ENCODE measurements at regions of chr16 and their contacts with region 1.

Region 1: GRCh38 chr16:20849587-20850390 is 43.5 kb downstream of the REXO5 start:
- DNase-seq: peak; percentile 42 to 69
- H3K4me3 ChIP-seq: no peak overlapping the region
- H3K27ac ChIP-seq: no peak overlapping the region
- H3K4me1 ChIP-seq: peaks cover 33% of the 10 kb centered on the region
- H3K27me3 ChIP-seq: no peaks in the 10 kb centered on the region
- CTCF ChIP-seq: peak; percentile 99

Region 2: GRCh38 chr16:20191566-20191965 is 658.2 kb before region 1 on chr16:
- CTCF ChIA-PET with region 1: no interaction called
- POLR2A ChIA-PET with region 1: no interaction called
- intact Hi-C with region 1: no loop called
- DNase-seq: no peak
- H3K4me3 ChIP-seq: no peak overlapping the region
- H3K27ac ChIP-seq: no peak overlapping the region
- H3K4me1 ChIP-seq: no peaks in the 10 kb centered on the region
- H3K27me3 ChIP-seq: peaks cover 14% of the 10 kb centered on the region
- CTCF ChIP-seq: no peak

Region 3: DNA sequence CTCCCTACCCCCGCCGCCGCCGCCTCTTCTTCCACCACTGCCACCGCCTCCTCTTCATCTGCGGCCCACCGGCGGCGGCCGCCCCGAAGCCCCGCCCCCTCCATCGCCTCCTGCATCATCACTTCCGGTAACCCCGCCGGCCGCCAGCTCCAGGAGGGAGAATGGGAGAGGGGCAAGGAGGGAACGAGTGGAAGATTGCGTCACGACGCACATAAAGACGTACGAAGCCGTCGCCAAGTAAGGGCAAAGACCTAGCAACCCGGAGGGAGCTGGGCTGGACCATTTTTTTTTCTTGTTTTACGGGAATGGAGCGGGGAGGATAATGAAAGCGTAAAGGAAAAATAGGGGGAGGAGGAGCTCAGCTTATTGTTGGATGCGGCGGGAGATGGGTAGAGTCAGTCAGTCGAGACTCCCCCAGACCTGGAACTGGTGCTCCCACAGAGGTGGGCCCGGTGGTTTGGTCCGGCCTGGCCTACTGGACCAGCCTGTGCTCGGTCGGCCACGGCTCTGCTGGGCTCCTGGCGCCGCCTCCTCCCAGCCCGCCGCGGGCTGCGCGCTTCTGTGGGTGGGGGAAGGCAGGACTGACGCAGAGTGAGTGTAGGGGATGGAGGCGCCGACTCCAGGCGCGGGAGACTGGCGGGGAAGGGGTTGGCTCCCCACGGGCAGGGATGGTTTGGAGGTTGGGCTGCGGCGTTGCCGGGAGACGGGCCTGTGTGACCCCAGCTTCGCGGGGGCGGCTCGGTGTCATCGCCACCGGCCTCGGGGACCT is 50.7 kb after region 1 on chr16 and contains the starts of genes DCUN1D3 and LYRM1:
- CTCF ChIA-PET with region 1: no interaction called
- POLR2A ChIA-PET with region 1: no interaction called
- intact Hi-C with region 1: loop called (anchors 1 kb)
- DNase-seq: peak; percentile 90 to 94
- H3K4me3 ChIP-seq: peak within 1 kb of the TSS; percentile 84
- H3K27ac ChIP-seq: peak within 1 kb of the TSS; percentile 99
- H3K4me1 ChIP-seq: peaks cover 65% of the 10 kb centered on the region
- H3K27me3 ChIP-seq: no peaks in the 10 kb centered on the region
- CTCF ChIP-seq: no peak
- total RNA-seq, gene DCUN1D3: 11.8 and 14.6 TPM in 2 replicates
- total RNA-seq, gene LYRM1: 32.2 and 51.7 TPM in 2 replicates

Region 4: GRCh38 chr16:20938426-20938825 is 88.6 kb after region 1 on chr16:
- CTCF ChIA-PET with region 1: no interaction called
- POLR2A ChIA-PET with region 1: no interaction called
- intact Hi-C with region 1: loop called (anchors 5 kb)
- DNase-seq: peak; percentile 38 to 87
- H3K4me3 ChIP-seq: peak overlapping the region; percentile 22; the same call in 1 of the 2 replicates
- H3K27ac ChIP-seq: peak overlapping the region; percentile 95
- H3K4me1 ChIP-seq: peaks cover 31% of the 10 kb centered on the region
- H3K27me3 ChIP-seq: no peaks in the 10 kb centered on the region
- CTCF ChIP-seq: no peak

Region 5: DNA sequence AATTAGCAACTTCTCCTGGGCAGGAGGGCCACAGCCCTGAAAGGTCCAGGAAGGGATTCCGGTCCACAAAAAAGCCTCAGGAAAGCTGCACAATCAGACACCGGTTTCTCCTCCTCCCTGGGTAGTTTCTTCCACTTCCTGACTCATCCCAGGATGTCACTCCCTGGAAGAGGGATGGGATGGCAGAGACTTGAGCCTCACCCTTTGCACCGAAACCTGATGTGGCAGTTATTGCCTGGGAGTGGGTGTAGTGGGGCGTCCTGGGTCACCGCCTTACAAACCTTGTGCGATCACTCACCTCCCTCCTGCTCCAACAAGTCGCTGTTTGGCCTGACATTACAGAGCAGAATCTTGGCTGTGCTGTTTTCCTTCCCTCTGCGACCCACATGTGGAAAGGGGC is 121.6 kb after region 1 on chr16:
- CTCF ChIA-PET with region 1: no interaction called
- POLR2A ChIA-PET with region 1: interaction called, 11 read pairs
- intact Hi-C with region 1: no loop called
- DNase-seq: no peak
- H3K4me3 ChIP-seq: no peak overlapping the region
- H3K27ac ChIP-seq: no peak overlapping the region
- H3K4me1 ChIP-seq: 0 out of 2 replicates have a peak, but pooled peaks cover 4% of the 10 kb centered on the region
- H3K27me3 ChIP-seq: no peaks in the 10 kb centered on the region
- CTCF ChIP-seq: no peak

Region 6: DNA sequence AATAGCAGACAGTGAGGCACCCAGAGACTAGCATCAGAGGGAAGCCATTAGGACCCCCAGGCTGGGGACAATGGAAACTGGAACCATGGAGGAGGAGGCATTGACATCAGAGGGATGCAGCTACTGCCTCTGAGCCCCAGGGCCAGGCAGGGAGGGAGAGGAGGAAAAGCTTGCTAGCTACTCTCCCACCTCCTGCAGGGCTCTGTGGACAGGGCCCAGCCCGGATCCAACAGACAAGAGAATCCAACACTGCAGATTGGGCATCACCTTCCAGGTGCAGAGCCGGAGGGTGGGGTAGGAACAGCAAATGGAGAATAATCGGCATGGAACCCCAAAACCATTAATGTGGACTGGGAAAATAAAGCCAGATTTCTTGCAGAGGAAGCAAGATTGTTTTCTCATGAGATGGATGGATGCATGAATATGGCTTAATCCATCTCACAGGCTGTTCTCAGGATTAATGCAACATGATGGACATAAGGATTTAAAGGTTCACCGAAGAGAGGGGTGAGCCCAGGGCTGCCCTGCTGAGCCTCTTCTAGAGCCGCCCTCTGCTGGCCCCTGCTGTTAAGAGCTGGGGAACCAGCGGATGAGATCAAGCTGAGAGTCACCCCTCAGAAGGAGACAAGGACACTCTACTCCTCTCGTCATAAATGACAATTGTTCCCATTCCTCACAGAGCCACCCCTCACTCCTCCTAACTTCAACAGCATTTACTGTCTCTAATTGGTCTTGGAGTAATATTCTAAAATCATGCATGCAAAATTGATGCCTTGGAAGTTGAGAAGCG is 252.0 kb after region 1 on chr16:
- CTCF ChIA-PET with region 1: interaction called, 9 read pairs
- POLR2A ChIA-PET with region 1: no interaction called
- intact Hi-C with region 1: loop called (anchors 5 kb)
- DNase-seq: no peak
- H3K4me3 ChIP-seq: no peak overlapping the region
- H3K27ac ChIP-seq: no peak overlapping the region
- H3K4me1 ChIP-seq: no peaks in the 10 kb centered on the region
- H3K27me3 ChIP-seq: no peaks in the 10 kb centered on the region; the same call in 1 of the 2 replicates
- CTCF ChIP-seq: peak; percentile 57

Region 7: DNA sequence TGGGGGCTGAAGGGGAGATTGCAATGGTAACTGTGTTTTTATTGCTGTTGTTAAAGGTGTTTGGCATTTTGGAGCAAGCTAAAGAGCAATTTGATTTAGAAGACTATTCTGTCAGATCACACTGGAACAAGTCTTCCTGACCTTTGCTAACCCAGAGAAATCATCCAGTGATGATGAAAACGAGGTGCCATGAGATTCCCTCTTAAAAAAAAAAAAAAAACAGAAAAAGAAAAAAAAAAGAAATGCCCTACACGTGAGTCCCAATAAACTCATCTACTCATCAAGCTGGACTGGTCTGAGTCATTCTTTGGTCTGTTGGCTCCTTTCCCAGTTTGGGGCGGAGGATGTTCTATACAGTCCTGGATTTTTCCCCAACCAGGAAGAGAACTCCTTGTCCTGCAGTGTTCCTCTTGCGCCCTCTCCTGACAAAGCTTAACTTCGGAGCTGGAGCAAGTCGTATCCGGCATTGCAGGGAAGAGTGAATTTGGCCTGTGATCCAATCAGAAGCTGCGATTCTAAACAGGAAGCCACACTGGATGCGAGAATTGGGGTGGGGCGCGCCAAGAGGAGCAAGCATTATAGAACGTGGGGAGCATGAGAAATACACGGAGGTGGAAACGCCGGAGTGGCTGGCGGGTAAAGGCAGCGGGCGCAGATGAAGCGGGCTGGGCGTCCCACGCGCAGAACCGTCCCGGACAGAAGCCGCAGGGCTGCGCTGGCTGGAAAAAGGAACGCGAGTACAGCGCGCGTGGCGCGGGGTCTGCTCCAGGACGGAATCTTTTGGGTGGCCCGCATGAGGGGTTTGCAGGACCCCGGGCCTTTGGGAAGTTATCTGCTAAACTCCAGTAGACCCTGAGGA is 450.7 kb after region 1 on chr16:
- CTCF ChIA-PET with region 1: interaction called, 9 read pairs
- POLR2A ChIA-PET with region 1: no interaction called
- intact Hi-C with region 1: loop called (anchors 1 kb)
- DNase-seq: peak; percentile 98 to 100
- H3K4me3 ChIP-seq: peak overlapping the region; percentile 88
- H3K27ac ChIP-seq: peak overlapping the region; percentile 85
- H3K4me1 ChIP-seq: peaks cover 27% of the 10 kb centered on the region
- H3K27me3 ChIP-seq: no peaks in the 10 kb centered on the region
- CTCF ChIP-seq: peak; percentile 80

Region 8: DNA sequence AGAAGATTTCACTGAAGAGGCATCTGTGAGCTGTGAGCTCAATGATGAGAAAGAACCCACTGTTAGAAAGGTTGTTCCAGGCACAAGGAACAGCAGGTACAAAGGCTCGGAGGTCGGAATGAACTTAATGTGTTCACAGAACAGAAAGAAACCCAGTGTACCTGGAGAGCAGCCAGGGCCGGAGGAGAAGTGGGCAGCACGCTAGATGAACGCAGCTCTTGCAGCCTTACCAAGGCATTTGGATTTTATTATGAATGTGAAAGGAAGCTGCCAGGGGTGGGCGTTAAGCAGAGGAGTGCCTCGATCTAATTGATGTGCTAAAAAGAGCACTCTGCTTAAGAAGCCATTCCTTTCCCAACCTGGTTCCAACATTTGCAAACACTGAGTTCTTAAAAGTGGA is 1375.3 kb after region 1 on chr16:
- CTCF ChIA-PET with region 1: no interaction called
- POLR2A ChIA-PET with region 1: no interaction called
- intact Hi-C with region 1: no loop called
- DNase-seq: no peak
- H3K4me3 ChIP-seq: no peak overlapping the region
- H3K27ac ChIP-seq: no peak overlapping the region
- H3K4me1 ChIP-seq: no peaks in the 10 kb centered on the region
- H3K27me3 ChIP-seq: no peaks in the 10 kb centered on the region
- CTCF ChIP-seq: no peak